Mammary epithelial cell (primary cell): ENCODE measurements at regions of chr2 and their contacts with region 1.

Region 1: DNA sequence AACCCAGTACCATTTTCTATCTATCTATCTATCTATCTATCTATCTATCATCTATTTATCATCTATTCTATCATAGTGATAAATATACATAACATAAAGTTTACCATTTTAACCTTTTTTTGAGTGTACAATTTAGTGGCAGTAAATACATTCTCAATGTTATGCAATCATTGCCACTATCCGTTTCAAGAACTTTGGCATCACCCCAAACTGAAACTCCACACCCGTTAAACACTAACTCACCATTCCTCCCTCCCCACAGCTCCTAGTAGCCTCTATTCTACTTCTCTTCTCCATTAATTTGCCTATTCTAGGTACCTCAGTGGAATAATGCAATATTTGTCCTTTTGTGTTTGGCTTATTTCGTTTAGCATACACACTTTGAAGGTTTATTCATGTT is 82.5 kb upstream of the KCNE4 start:
- DNase-seq: no peak
- H3K4me3 ChIP-seq: no peak overlapping the region
- H3K27ac ChIP-seq: no peak overlapping the region
- H3K4me1 ChIP-seq: peaks cover 24% of the 10 kb centered on the region
- H3K27me3 ChIP-seq: no peaks in the 10 kb centered on the region
- CTCF ChIP-seq: no peak

Region 2: DNA sequence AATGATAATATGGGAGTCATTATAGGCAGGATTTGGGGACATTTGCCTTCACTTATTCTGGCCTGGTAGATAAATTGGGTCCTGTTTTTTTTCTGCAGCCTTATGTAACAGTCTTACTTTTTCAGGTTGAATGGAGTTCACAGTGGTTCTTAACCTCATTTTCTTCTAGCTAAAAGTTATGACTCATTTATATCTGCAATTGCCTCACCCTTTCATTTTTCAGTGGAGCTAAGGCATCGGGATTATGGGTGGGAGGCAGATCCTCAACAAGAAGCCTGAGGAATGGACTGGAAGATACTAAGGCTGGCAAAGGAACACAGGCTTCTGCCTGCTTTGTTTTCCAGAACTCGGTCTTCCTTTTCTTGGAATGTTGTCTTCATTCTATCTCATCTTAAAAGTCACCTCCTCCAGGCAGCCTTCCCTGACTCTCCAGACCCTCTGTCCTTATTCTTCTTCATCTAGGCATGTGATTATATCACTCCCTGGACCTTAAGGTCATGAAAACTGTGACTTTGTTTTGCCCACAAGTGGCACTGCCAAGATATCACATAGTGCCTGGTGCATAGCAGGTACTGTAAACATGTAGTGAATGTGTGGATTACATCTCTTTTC is 149.7 kb before region 1 on chr2:
- CTCF ChIA-PET with region 1: no interaction called
- dilution Hi-C with region 1: no loop called
- in situ Hi-C with region 1: no loop called
- intact Hi-C with region 1: no loop called
- DNase-seq: peak; percentile 61
- H3K4me3 ChIP-seq: no peak overlapping the region
- H3K27ac ChIP-seq: no peak overlapping the region
- H3K4me1 ChIP-seq: peaks cover 12% of the 10 kb centered on the region
- H3K27me3 ChIP-seq: no peaks in the 10 kb centered on the region
- CTCF ChIP-seq: no peak

Region 3: DNA sequence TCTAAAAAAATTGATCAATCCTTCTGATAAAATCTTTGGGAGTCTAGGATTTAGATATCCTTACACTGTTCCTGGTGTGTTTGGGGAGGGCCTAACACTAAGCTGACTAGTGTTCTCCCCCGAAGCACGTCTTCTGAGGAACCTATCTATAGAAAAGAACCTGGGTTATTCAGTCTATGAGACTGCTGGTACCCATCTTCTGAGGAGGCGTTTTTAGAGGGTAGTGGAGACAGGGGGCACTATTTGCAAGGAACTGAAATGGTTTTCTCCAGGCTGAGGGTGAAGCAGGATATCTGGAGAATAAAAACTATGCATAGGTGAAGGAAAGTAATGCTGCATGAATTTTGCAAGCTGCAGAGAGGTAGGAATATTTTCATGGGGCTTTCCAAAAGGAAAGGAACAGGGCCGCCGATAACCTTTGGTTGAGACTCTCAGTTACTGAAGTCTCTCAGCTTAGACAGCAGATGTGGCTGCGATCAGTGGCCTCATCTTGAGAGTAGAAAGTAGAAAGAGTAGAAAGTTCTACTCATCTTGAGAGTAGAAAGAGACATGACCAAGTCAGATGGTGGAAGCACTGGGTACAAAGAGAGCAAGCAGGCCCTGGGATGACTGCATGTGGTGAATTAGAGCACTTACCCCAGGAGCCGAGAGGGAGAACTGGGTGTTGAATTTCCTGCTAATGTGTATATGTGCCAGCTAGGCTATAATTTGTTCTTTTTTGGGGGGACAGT is 50.7 kb after region 1 on chr2:
- CTCF ChIA-PET with region 1: no interaction called
- dilution Hi-C with region 1: no loop called
- in situ Hi-C with region 1: no loop called
- intact Hi-C with region 1: no loop called
- DNase-seq: no peak
- H3K4me3 ChIP-seq: no peak overlapping the region
- H3K27ac ChIP-seq: no peak overlapping the region
- H3K4me1 ChIP-seq: no peaks in the 10 kb centered on the region
- H3K27me3 ChIP-seq: no peaks in the 10 kb centered on the region
- CTCF ChIP-seq: no peak

Region 4: GRCh38 chr2:223383315-223383714 is 413.8 kb after region 1 on chr2:
- CTCF ChIA-PET with region 1: no interaction called
- dilution Hi-C with region 1: no loop called
- in situ Hi-C with region 1: no loop called
- intact Hi-C with region 1: loop called (anchors 1 kb)
- DNase-seq: no peak
- H3K4me3 ChIP-seq: no peak overlapping the region
- H3K27ac ChIP-seq: no peak overlapping the region
- H3K4me1 ChIP-seq: no peaks in the 10 kb centered on the region
- H3K27me3 ChIP-seq: no peaks in the 10 kb centered on the region
- CTCF ChIP-seq: no peak

Region 5: DNA sequence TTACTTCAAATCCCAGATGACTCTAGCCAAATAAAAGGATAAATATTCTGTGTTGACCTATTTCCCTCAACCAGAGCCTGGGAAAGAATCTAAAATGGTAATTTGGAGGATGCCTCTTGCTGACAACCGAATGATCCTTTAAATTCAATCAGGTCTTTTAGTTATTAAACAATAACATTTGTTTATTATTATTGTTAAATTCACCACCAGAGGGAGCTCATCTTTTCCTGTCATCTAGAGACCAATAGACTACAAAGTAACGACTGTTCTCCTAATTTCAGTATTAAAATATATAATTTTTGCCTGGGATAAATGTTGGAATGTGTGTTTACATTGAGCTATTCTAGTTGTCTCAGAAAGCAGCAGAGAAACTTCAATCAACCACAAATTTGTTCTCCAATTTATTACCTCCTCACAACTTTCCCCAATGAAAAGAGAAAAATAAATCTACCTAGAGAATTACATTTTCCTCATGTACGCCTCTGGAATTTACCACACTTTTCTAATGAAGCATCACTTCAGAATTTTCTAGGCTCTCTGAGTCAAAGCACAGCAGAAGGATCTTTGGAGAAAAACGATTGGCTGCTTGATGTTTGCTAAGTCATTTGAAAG is 489.9 kb after region 1 on chr2:
- CTCF ChIA-PET with region 1: interaction called, 5 read pairs
- dilution Hi-C with region 1: no loop called
- in situ Hi-C with region 1: no loop called
- intact Hi-C with region 1: loop called (anchors 2 kb)
- DNase-seq: peak; percentile 12
- H3K4me3 ChIP-seq: no peak overlapping the region
- H3K27ac ChIP-seq: peak overlapping the region; percentile 1
- H3K4me1 ChIP-seq: peaks cover 17% of the 10 kb centered on the region
- H3K27me3 ChIP-seq: no peaks in the 10 kb centered on the region
- CTCF ChIP-seq: peak; percentile 29 to 43

Region 6: DNA sequence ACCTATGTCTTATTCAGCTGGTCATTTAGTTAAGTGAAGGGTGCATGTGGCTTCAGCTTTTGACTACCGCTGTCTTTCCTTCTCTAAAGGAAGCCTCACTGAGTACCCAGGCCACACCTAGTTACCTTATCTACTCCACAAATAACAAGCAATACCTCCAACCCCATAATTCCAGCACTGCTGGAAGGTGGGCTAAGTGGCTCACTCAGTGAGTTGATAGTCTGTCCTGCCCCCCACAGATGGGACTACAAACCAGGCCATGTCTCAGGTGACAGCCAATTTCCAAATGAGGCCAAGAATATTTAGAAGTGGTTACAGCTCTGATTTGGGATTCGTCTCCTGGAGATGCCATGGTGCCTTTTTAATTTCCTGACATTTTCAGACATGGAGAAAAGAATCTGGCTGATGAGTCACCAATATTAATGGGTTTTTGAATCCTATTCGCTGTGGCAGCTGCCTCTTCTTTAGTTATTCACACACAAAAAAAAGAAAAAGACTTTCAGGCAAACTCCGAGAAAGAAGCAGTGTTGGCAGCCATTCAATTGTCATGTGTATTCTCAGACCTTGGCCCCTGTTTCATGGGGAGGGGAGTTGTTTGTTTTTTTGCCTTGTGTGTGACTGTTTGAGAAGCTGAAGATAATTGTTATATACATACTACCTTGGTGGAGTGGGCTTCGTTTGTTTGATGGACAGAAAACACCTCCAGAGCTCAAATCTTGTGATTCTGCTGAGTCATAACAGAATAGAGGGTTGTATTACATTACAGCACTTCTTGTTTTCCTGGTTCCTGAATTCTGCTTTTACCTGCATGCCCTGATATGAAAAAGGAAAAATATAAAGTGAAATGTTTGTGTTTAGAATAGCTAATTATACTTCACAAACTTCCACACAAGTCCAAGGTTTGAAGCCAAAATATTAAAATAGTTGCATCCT is 568.4 kb after region 1 on chr2:
- CTCF ChIA-PET with region 1: no interaction called
- dilution Hi-C with region 1: no loop called
- in situ Hi-C with region 1: no loop called
- intact Hi-C with region 1: no loop called
- DNase-seq: no peak
- H3K4me3 ChIP-seq: no peak overlapping the region
- H3K27ac ChIP-seq: no peak overlapping the region
- H3K4me1 ChIP-seq: peaks cover 21% of the 10 kb centered on the region
- H3K27me3 ChIP-seq: no peaks in the 10 kb centered on the region
- CTCF ChIP-seq: no peak

Region 7: DNA sequence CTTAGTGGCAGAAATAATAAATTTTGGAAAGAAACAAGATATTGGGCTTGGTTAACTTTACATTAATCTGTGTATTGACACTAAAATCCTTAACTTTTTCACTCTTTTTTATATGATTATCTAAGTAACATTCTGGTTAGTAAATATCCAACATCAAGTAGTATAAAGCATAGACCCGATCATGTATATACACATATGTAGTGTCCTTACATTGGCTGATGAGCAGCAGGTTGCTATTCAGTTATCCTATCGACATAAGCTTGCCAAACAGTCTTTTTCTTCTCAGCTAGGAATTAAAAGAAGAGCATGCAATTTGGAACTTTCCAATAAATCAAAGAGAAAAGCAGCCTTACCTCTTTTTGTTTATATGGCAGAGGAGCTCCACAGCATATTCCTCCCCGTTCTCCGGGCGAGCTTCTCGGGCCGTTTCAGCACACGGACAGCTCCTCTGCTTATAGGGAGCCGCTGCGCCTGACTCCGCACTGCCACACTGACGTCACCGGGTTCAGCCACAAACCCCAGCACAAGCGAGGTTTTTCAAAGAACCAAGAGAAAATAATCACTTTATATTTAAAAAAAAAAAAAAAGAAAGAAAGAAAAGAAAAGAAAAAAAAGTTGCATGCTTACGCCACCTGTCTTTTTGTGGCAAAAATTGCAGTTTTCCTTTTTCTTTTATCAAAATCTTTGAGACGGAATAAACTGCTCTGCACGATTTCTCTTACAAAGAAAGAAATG is 632.6 kb after region 1 on chr2 and contains the start of gene SCG2:
- CTCF ChIA-PET with region 1: interaction called, 4 read pairs
- dilution Hi-C with region 1: no loop called
- in situ Hi-C with region 1: no loop called
- intact Hi-C with region 1: loop called (anchors 1 kb)
- DNase-seq: peak; percentile 64
- H3K4me3 ChIP-seq: no peak within 1 kb of the TSS
- H3K27ac ChIP-seq: no peak within 1 kb of the TSS
- H3K4me1 ChIP-seq: peaks cover 12% of the 10 kb centered on the region
- H3K27me3 ChIP-seq: no peaks in the 10 kb centered on the region
- CTCF ChIP-seq: peak in 1 of 2 donors; percentile 25
- total RNA-seq, gene SCG2: not detected